ENCODE measurements at regions of chr5 and their contacts with region 1.

Region 1: DNA sequence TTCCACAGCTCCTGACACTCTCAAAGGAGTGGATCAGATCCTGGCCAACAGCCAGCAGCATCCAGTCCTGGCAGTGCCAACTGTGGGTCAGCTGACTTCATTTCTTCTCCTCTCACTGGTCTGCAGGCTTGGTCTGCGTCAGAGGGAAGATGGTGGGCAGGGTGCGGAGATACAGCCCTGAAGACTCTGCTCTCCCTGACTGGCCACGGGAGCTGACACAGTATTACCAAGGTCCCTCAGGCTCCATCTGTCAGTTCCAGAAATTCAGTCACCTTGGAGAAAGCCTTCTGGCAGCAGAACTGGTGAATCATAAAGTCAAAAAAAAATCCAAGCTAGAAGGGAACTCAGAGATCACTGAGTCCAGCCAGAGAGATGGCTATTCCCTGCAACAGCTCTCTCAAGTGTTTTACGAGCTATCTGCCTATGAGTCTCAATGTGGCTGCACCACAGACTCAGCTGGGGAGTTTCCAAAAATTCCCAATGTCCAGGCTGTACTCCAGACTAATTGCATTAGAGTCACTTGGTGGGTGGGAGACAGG is 28.0 kb downstream of the C1QTNF2 start:
- DNase-seq: no peak
- H3K4me3 ChIP-seq: no peak overlapping the region
- H3K4me3 Mint-ChIP-seq: no peak overlapping the region
- H3K27ac ChIP-seq: no peak overlapping the region
- H3K27ac Mint-ChIP-seq: no peak overlapping the region
- H3K4me1 ChIP-seq: no peaks in the 10 kb centered on the region
- H3K4me1 Mint-ChIP-seq: peaks cover 2% of the 10 kb centered on the region
- H3K27me3 ChIP-seq: no peaks in the 10 kb centered on the region
- H3K27me3 Mint-ChIP-seq: peaks cover 0 to 6% (median 1%) of the 10 kb centered on the region in 3 donors
- CTCF ChIP-seq: no peak

Region 2: GRCh38 chr5:160021831-160022446 is 320.5 kb before region 1 on chr5:
- intact Hi-C with region 1: loop called in 1 of 2 experiments (anchors 5 kb)
- DNase-seq: peak; percentile 38 to 58 (median 57)
- H3K4me3 ChIP-seq: no peak overlapping the region
- H3K4me3 Mint-ChIP-seq: no peak overlapping the region
- H3K27ac ChIP-seq: no peak overlapping the region
- H3K27ac Mint-ChIP-seq: peak overlapping the region in 2 of 7 donors; percentile 68 to 78
- H3K4me1 ChIP-seq: peaks cover 3 to 7% of the 10 kb centered on the region in 2 donors
- H3K4me1 Mint-ChIP-seq: peaks cover 17% of the 10 kb centered on the region
- H3K27me3 ChIP-seq: no peaks in the 10 kb centered on the region
- H3K27me3 Mint-ChIP-seq: no peaks in the 10 kb centered on the region
- CTCF ChIP-seq: peak; percentile 85

Region 3: GRCh38 chr5:160199410-160199911 is 143.0 kb before region 1 on chr5:
- intact Hi-C with region 1: loop called in 1 of 2 experiments (anchors 2 kb)
- DNase-seq: peak; percentile 42 to 68 (median 61)
- H3K4me3 ChIP-seq: peak overlapping the region in 2 of 3 experiments; percentile 7 to 60
- H3K4me3 Mint-ChIP-seq: peak overlapping the region; percentile 69 to 84
- H3K27ac ChIP-seq: no peak overlapping the region
- H3K27ac Mint-ChIP-seq: no peak overlapping the region
- H3K4me1 ChIP-seq: peaks cover 9 to 10% of the 10 kb centered on the region in 2 donors
- H3K4me1 Mint-ChIP-seq: peaks cover 15% of the 10 kb centered on the region
- H3K27me3 ChIP-seq: no peaks in the 10 kb centered on the region
- H3K27me3 Mint-ChIP-seq: peaks cover 6 to 15% (median 13%) of the 10 kb centered on the region in 3 donors
- CTCF ChIP-seq: peak; percentile 97

Region 4: GRCh38 chr5:160245506-160246086 is 96.9 kb before region 1 on chr5:
- intact Hi-C with region 1: loop called in 1 of 2 experiments (anchors 10 kb)
- DNase-seq: no peak
- H3K4me3 ChIP-seq: no peak overlapping the region
- H3K4me3 Mint-ChIP-seq: no peak overlapping the region
- H3K27ac ChIP-seq: no peak overlapping the region
- H3K27ac Mint-ChIP-seq: peak overlapping the region in 2 of 7 donors; percentile 14 to 20
- H3K4me1 ChIP-seq: no peaks in the 10 kb centered on the region
- H3K4me1 Mint-ChIP-seq: no peaks in the 10 kb centered on the region
- H3K27me3 ChIP-seq: no peaks in the 10 kb centered on the region
- H3K27me3 Mint-ChIP-seq: peaks cover 0 to 6% (median 4%) of the 10 kb centered on the region in 3 donors
- CTCF ChIP-seq: no peak

Region 5: GRCh38 chr5:160259326-160259725 is 83.1 kb before region 1 on chr5:
- intact Hi-C with region 1: no loop called
- DNase-seq: no peak
- H3K4me3 ChIP-seq: no peak overlapping the region
- H3K4me3 Mint-ChIP-seq: no peak overlapping the region
- H3K27ac ChIP-seq: no peak overlapping the region
- H3K27ac Mint-ChIP-seq: no peak overlapping the region
- H3K4me1 ChIP-seq: peaks cover 0 to 9% of the 10 kb centered on the region in 2 donors
- H3K4me1 Mint-ChIP-seq: peaks cover 20% of the 10 kb centered on the region
- H3K27me3 ChIP-seq: no peaks in the 10 kb centered on the region
- H3K27me3 Mint-ChIP-seq: peaks cover 6 to 13% (median 10%) of the 10 kb centered on the region in 3 donors
- CTCF ChIP-seq: no peak

Measured in CD14-positive monocyte (primary cell).